Activated T-helper 1 cell treated with anti-CD3 and anti-CD28 coated beads, Interleukin-12 subunit alpha, Interleukin-12 subunit beta, Interleukin-2, Interleukin-4 antibody, amounts not matched to agents 30 ng/mL and 10 ng/mL and 1 ng/mL, durations not matched to agents 14 hours and 24 hours and 36 hours (primary cell): ENCODE measurements at regions of chr2 and their contacts with region 1.

Region 1: DNA sequence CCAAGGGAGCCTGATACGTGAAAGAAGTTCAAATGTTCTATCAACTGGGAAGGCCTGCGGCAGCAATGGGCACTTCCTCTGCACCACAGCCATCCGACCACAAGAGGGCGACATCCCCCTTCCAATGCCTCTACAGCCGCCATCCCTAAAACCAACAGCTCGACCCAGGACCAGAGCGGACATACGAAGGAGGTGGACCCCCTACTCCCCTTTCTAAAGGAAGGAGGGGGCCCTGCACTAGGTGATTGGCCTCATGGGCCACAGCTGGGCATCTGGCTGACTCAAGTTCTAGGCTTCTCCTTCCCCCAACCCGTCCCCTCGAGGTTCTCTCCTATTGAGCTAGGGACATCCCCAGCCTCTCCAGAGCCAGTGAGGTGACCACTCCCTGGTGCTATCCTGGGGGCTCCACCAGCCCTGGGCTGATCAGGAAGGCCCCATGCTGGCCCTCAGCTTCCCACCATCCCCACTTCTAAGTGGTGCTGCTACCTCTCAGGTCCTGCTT is 217.2 kb downstream of the TNS1 start:
- DNase-seq: peak; percentile 57
- H3K4me3 Mint-ChIP-seq: no peak overlapping the region
- H3K27ac Mint-ChIP-seq: no peak overlapping the region
- H3K4me1 Mint-ChIP-seq: peaks cover 19% of the 10 kb centered on the region
- H3K27me3 Mint-ChIP-seq: peaks cover 4% of the 10 kb centered on the region

Region 2: GRCh38 chr2:217886720-217887309 is 101.2 kb after region 1 on chr2:
- intact Hi-C with region 1: loop called (anchors 1 kb)
- DNase-seq: peak; percentile 33
- H3K4me3 Mint-ChIP-seq: no peak overlapping the region
- H3K27ac Mint-ChIP-seq: no peak overlapping the region
- H3K4me1 Mint-ChIP-seq: no peaks in the 10 kb centered on the region
- H3K27me3 Mint-ChIP-seq: peaks cover 5% of the 10 kb centered on the region

Region 3: DNA sequence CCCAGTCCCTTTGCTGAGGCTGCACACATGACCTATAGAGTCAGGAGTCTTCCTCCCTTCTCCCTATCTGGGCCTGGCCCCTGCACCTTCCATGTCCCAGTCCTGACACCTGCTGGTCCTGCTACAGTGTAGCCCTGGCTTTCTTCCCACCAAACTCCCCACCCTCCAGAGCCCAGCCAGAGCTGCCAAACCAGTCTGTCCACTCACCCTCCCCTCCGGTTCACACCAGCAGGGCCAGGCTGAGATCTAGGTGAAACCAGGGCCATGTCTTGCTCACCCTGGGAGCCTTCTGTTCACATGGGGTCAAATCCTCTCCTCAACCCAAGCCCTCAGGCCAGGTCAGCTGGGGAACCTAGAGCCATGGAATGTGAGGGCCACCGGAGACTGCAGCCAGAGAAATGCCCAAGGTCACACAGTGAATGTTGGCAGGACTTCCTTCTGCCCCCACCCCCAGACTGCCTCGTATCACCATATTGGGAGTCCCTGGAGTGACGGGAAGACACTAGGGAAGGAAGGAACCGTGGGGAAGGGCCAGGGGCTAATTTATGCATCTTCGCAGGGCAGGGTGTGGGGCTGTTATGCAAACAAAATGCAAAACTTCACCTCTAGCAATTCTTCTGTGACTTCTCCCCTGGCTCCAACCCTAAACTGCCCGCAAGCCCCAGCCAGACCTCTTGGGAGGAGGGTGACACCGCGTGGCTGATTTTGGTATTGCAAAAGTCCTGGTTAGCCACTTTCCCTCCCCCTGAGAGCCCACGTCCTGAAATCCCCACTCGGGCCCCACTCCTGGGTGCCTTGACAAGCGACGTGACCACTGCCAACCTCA is 202.6 kb after region 1 on chr2:
- intact Hi-C with region 1: loop called (anchors 1 kb)
- DNase-seq: peak; percentile 45
- H3K4me3 Mint-ChIP-seq: no peak overlapping the region
- H3K27ac Mint-ChIP-seq: no peak overlapping the region
- H3K4me1 Mint-ChIP-seq: no peaks in the 10 kb centered on the region
- H3K27me3 Mint-ChIP-seq: peaks cover 11% of the 10 kb centered on the region

Region 4: DNA sequence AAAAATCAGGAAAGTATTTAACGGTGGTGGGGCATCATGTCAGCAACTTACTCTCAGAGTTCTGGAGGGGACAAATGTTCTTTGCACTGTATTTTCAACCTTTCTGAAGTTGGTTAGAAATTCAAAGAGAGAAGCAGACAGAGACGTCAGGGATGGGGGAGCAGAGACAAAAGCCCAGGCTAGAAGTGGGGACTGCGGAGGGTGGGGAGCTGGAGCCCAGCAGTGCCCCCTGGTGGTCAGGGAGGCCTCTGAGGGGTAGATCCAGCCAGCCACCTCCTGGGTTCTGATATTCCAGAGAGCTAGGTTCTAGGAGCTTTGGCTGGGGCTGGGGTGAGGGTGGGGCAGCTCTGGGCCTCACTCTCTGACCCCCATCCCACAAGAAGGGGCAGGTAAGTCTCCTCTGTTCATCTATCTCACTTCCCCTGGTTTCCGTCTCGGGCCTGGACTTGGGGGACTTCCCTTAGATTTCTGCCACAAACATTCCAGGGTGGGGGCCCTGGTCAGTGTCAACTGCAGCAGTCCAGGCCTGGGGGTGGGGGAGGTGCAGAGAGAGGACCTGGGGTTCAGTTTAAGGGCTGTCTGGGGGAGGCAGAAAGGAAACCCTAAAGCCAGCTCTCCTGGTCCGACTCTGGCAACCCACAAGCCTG is 208.3 kb after region 1 on chr2:
- intact Hi-C with region 1: loop called (anchors 1 kb)
- DNase-seq: peak; percentile 9
- H3K4me3 Mint-ChIP-seq: no peak overlapping the region
- H3K27ac Mint-ChIP-seq: no peak overlapping the region
- H3K4me1 Mint-ChIP-seq: no peaks in the 10 kb centered on the region
- H3K27me3 Mint-ChIP-seq: peaks cover 11% of the 10 kb centered on the region

Region 5: GRCh38 chr2:218033590-218034496 is 248.2 kb after region 1 on chr2:
- intact Hi-C with region 1: loop called (anchors 1 kb)
- DNase-seq: no peak
- H3K4me3 Mint-ChIP-seq: peak overlapping the region; percentile 53
- H3K27ac Mint-ChIP-seq: no peak overlapping the region
- H3K4me1 Mint-ChIP-seq: peaks cover 3% of the 10 kb centered on the region
- H3K27me3 Mint-ChIP-seq: peaks cover 2% of the 10 kb centered on the region

Region 6: GRCh38 chr2:218063486-218063885 is 277.9 kb after region 1 on chr2:
- intact Hi-C with region 1: loop called (anchors 1 kb)
- DNase-seq: no peak
- H3K4me3 Mint-ChIP-seq: no peak overlapping the region
- H3K27ac Mint-ChIP-seq: no peak overlapping the region
- H3K4me1 Mint-ChIP-seq: peaks cover under 1% of the 10 kb centered on the region
- H3K27me3 Mint-ChIP-seq: peaks cover 12% of the 10 kb centered on the region